OCI-LY7 (cell line): ENCODE measurements at regions of chr6 and their contacts with region 1.

Region 1: GRCh38 chr6:106085984-106086813 is at the start of gene PRDM1:
- DNase-seq: peak; percentile 98
- H3K4me3 ChIP-seq: peak within 1 kb of the TSS; percentile 63
- H3K27ac ChIP-seq: peak within 1 kb of the TSS; percentile 87
- H3K4me1 ChIP-seq: peaks cover 73% of the 10 kb centered on the region
- CTCF ChIP-seq: peak; percentile 69
- total RNA-seq, gene PRDM1: 1.5 and 2.2 TPM in 2 replicates

Region 2: GRCh38 chr6:105484238-105485161 is 601.7 kb before region 1 on chr6:
- CTCF ChIA-PET with region 1: no interaction called
- POLR2A ChIA-PET with region 1: interaction called, 3 read pairs
- intact Hi-C with region 1: loop called (anchors 1 kb)
- DNase-seq: peak; percentile 50
- H3K4me3 ChIP-seq: no peak overlapping the region
- H3K27ac ChIP-seq: no peak overlapping the region
- H3K4me1 ChIP-seq: peaks cover 5% of the 10 kb centered on the region
- CTCF ChIP-seq: peak; percentile 98

Region 3: GRCh38 chr6:105578179-105578707 is 508.0 kb before region 1 on chr6:
- CTCF ChIA-PET with region 1: no interaction called
- POLR2A ChIA-PET with region 1: no interaction called
- intact Hi-C with region 1: no loop called
- DNase-seq: no peak
- H3K4me3 ChIP-seq: no peak overlapping the region
- H3K27ac ChIP-seq: no peak overlapping the region
- H3K4me1 ChIP-seq: no peaks in the 10 kb centered on the region
- CTCF ChIP-seq: no peak

Region 4: DNA sequence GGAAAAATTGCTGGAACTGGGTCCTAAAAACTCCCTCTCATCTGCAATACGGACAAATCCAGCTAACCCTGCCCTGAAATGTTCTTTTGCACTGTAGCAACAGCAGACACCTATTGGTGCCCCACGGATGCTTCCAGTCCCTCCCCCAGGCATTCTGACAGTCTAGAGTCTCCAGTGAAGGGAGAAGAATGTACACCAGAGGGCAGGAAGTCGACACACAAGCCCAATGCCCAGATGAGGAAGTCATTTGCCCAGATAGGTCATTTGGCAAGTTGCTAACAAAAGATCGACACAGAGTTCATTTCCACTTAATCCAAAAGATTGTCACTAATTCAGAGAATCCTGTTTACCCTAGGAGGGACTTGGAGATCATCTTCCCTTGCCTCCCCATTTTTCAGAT is 293.1 kb before region 1 on chr6:
- CTCF ChIA-PET with region 1: no interaction called
- POLR2A ChIA-PET with region 1: interaction called, 3 read pairs
- intact Hi-C with region 1: loop called (anchors 1 kb)
- DNase-seq: peak; percentile 81
- H3K4me3 ChIP-seq: peak overlapping the region; percentile 2
- H3K27ac ChIP-seq: peak overlapping the region; percentile 35
- H3K4me1 ChIP-seq: peaks cover 56% of the 10 kb centered on the region
- CTCF ChIP-seq: peak; percentile 69

Region 5: GRCh38 chr6:105898286-105898685 is 187.9 kb before region 1 on chr6:
- CTCF ChIA-PET with region 1: no interaction called
- POLR2A ChIA-PET with region 1: interaction called, 4 read pairs
- intact Hi-C with region 1: loop called (anchors 5 kb)
- DNase-seq: peak; percentile 41
- H3K4me3 ChIP-seq: no peak overlapping the region
- H3K27ac ChIP-seq: peak overlapping the region; percentile 21
- H3K4me1 ChIP-seq: peaks cover 98% of the 10 kb centered on the region
- CTCF ChIP-seq: no peak

Region 6: DNA sequence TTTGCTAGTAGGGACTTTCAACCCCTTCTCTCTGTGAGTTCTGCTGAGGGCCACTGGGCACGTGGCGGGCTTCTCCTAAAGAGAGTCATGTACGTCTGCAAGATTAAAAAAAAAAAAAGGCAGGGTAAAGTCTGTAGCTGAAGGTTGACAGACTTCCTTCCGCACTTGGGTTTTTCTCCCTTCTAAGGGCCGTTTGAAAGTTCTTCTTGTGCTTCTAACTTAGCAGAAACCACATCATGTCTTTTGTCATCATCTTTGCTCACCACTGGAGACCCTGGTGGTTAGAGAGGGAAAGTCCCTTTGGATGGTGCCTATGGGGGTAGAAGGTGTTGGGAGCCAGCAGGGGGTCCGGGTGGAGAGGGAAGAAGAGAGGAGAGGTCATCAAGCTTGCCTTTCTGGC is 31.4 kb after region 1 on chr6:
- CTCF ChIA-PET with region 1: no interaction called
- POLR2A ChIA-PET with region 1: no interaction called
- intact Hi-C with region 1: no loop called
- DNase-seq: no peak
- H3K4me3 ChIP-seq: no peak overlapping the region
- H3K27ac ChIP-seq: no peak overlapping the region
- H3K4me1 ChIP-seq: no peaks in the 10 kb centered on the region
- CTCF ChIP-seq: no peak

Region 7: DNA sequence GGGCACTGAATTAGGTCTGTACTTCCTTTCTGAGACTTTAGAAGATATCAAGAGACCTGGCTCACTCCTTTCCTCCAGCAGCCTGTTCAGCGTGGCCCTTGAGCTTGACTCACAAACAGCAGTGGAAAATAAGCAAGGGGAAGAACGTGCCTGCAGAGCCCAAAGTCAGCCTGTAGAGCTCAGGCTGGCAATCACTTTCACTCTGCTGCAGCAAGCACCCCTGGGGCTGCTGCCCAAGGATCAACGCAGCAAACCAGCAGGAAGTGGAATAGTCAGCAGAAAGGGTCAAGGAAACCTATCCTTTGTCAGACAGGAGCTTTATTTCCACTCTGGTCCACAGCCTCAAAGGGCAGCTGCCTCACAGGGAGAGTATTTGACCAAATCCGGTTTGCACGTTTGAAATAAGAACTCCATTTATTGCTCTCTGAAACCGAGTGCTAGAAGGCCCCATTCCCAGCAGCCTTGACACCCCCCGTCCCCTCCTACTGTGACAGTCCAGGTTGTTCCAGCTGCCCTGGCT is 77.3 kb after region 1 on chr6:
- CTCF ChIA-PET with region 1: no interaction called
- POLR2A ChIA-PET with region 1: interaction called, 8 read pairs
- intact Hi-C with region 1: loop called (anchors 1 kb)
- DNase-seq: peak; percentile 74
- H3K4me3 ChIP-seq: peak overlapping the region; percentile 34
- H3K27ac ChIP-seq: peak overlapping the region; percentile 73
- H3K4me1 ChIP-seq: peaks cover 58% of the 10 kb centered on the region
- CTCF ChIP-seq: no peak

Region 8: GRCh38 chr6:106444777-106445507 is 358.7 kb after region 1 on chr6:
- CTCF ChIA-PET with region 1: no interaction called
- POLR2A ChIA-PET with region 1: no interaction called
- intact Hi-C with region 1: loop called (anchors 2 kb)
- DNase-seq: peak; percentile 85
- H3K4me3 ChIP-seq: no peak overlapping the region
- H3K27ac ChIP-seq: no peak overlapping the region
- H3K4me1 ChIP-seq: no peaks in the 10 kb centered on the region
- CTCF ChIP-seq: peak; percentile 94